Pancreas (tissue), 10 donors: ENCODE measurements at regions of chr1 and their contacts with region 1.

Region 1: GRCh38 chr1:43073490-43074230 is 98.4 kb downstream of the EBNA1BP2 start:
- DNase-seq: peak; percentile 55 to 77 (median 67)
- ATAC-seq: peak; percentile 85 to 97 (median 96)
- H3K4me3 ChIP-seq: no peak overlapping the region
- H3K27ac ChIP-seq: no peak overlapping the region
- H3K4me1 ChIP-seq: no peaks in the 10 kb centered on the region
- H3K27me3 ChIP-seq: no peaks in the 10 kb centered on the region
- CTCF ChIP-seq: peak; percentile 60 to 78 (median 69)

Region 2: GRCh38 chr1:42657971-42658879 is 415.4 kb before region 1 on chr1 and contains the start of gene PPIH:
- intact Hi-C with region 1: no loop called
- DNase-seq: peak; percentile 91 to 98 (median 95)
- ATAC-seq: peak; percentile 100
- H3K4me3 ChIP-seq: peak within 1 kb of the TSS; percentile 64 to 95 (median 76)
- H3K27ac ChIP-seq: peak within 1 kb of the TSS; percentile 72 to 84 (median 78)
- H3K4me1 ChIP-seq: peaks cover 0 to 9% (median 0%) of the 10 kb centered on the region in 3 donors
- H3K27me3 ChIP-seq: no peaks in the 10 kb centered on the region
- CTCF ChIP-seq: peak in 3 of 4 donors; percentile 12 to 29 (median 18)
- total RNA-seq, gene PPIH: 7.6 to 12.1 (median 9.1) TPM

Region 3: DNA sequence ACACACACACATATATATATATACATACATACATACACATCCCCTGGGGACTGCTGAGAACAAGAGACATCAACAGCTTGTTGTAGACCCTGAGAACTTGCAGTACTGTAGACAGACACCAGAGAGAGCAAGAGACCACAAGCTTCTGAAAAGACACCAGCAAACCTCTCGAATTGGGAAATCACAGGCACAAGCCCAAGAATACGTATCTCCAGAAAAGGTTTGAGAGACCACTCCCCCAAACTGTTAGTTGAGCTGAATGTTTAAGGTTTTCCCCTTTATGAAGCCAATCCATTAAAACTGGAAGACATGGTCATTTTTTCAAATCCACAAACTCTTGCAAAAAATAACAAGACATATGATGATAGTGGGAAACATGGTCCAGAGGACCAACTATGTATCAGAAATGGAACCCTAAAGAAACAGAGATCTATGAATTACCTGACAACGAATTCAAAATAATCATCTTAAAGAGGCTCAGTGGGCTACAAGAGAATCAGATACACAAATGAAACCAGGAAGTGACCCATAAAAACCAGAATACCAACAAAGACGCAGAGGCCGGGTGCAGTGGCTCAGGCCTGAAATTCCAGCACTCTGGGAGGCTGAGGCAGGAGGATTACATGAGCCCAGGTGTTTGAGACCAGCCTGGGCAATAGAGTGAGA is 160.1 kb before region 1 on chr1:
- intact Hi-C with region 1: loop called (anchors 5 to 10 kb)
- DNase-seq: peak in 2 of 6 donors; percentile 54 to 78
- ATAC-seq: peak; percentile 84 to 96 (median 95)
- H3K4me3 ChIP-seq: no peak overlapping the region
- H3K27ac ChIP-seq: no peak overlapping the region
- H3K4me1 ChIP-seq: no peaks in the 10 kb centered on the region
- H3K27me3 ChIP-seq: no peaks in the 10 kb centered on the region
- CTCF ChIP-seq: peak; percentile 44 to 65 (median 56)